Mammary epithelial cell (primary cell): ENCODE measurements at regions of chr11 and their contacts with region 1.

Region 1: GRCh38 chr11:7571640-7572000 is 57.8 kb downstream of the PPFIBP2 start:
- DNase-seq: peak; percentile 56
- H3K4me3 ChIP-seq: no peak overlapping the region
- H3K27ac ChIP-seq: no peak overlapping the region
- H3K4me1 ChIP-seq: peaks cover 20% of the 10 kb centered on the region
- H3K27me3 ChIP-seq: no peaks in the 10 kb centered on the region
- CTCF ChIP-seq: peak; percentile 96 to 98

Region 2: DNA sequence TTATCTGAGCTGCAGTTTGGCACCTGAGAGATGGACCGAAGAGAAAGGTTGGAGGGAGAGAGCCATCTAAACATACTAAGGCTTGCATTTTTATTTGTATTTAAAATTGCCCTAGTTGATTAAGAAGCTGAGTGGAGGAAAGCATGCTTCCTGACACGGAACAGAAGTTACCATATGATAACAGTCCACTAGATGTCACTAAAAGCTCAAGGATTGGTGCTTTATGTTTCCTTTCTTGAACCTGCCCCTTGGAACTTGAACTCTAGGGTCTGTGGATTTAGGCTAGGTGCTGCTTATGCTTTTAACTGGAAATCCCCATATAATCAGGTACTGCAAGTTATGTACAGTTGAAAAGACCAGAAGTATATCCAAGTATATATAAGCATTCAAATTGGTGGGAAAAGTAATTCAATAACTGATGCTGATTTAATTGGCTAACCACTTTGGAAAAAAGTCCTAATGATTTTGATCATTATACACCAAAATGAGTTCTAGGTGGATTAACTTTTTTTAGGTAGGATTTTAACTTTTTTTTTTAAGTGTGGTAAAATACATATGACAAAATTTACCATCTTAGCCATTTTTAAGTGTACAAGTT is 473.3 kb before region 1 on chr11:
- CTCF ChIA-PET with region 1: no interaction called
- dilution Hi-C with region 1: no loop called
- in situ Hi-C with region 1: no loop called
- intact Hi-C with region 1: loop called (anchors 1 kb)
- DNase-seq: peak; percentile 25
- H3K4me3 ChIP-seq: no peak overlapping the region
- H3K27ac ChIP-seq: no peak overlapping the region
- H3K4me1 ChIP-seq: no peaks in the 10 kb centered on the region
- H3K27me3 ChIP-seq: no peaks in the 10 kb centered on the region
- CTCF ChIP-seq: peak; percentile 61 to 68

Region 3: GRCh38 chr11:7442588-7443215 is 128.9 kb before region 1 on chr11:
- CTCF ChIA-PET with region 1: no interaction called
- dilution Hi-C with region 1: no loop called
- in situ Hi-C with region 1: no loop called
- intact Hi-C with region 1: no loop called
- DNase-seq: peak; percentile 40
- H3K4me3 ChIP-seq: no peak overlapping the region
- H3K27ac ChIP-seq: no peak overlapping the region
- H3K4me1 ChIP-seq: peaks cover 7% of the 10 kb centered on the region
- H3K27me3 ChIP-seq: no peaks in the 10 kb centered on the region
- CTCF ChIP-seq: peak; percentile 96

Region 4: DNA sequence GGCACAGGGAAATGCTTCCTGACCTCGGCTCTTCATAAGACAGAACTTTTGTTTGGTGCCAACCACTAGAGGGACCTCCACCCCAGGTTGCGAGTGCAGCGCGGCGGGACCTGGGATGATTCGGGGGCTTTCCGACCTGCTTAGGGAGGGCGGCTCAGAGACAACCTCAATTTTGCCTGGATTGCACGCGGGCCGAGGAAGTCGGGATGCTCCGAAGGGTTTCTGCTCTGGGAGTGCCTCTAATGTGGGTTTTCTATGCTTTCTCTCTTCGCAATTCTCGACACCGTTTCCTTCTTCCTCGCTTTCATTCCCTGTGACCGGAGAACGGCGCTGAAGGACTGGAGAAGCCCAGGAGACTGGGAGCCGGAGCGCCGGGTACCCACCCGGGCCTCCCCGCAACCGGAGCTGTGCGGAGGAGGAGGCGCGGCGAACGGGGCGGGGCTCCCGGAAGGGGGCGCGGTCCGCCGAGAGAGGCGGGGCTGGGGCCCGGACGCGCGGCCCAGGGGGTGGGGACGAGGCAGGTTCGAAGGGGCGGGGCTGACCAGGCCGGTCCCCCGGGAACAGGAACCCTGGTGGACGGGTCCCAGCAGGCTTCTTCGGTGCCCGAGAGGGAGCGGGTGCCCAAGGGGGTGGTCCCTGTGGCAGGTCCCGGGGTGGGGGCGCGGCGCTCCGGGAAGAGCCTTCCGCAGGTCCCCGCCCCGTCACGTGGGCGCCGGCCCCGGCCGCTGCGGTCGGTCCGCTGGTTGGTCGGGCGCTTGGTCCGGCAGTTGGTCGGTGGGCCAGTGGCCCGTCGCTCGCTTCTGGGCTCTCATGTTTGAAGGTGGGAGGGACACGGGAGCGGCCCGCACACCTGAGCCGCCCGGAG is 58.2 kb before region 1 on chr11 and contains the start of gene PPFIBP2:
- CTCF ChIA-PET with region 1: interaction called, 3 read pairs
- dilution Hi-C with region 1: no loop called
- in situ Hi-C with region 1: no loop called
- intact Hi-C with region 1: loop called (anchors 2 kb)
- DNase-seq: peak; percentile 64
- H3K4me3 ChIP-seq: peak within 1 kb of the TSS; percentile 67 to 85 (median 80)
- H3K27ac ChIP-seq: peak within 1 kb of the TSS; percentile 47
- H3K4me1 ChIP-seq: peaks cover 18% of the 10 kb centered on the region
- H3K27me3 ChIP-seq: no peaks in the 10 kb centered on the region
- CTCF ChIP-seq: peak; percentile 74 to 87
- total RNA-seq, gene PPFIBP2: 8.3 to 8.4 TPM

Region 5: DNA sequence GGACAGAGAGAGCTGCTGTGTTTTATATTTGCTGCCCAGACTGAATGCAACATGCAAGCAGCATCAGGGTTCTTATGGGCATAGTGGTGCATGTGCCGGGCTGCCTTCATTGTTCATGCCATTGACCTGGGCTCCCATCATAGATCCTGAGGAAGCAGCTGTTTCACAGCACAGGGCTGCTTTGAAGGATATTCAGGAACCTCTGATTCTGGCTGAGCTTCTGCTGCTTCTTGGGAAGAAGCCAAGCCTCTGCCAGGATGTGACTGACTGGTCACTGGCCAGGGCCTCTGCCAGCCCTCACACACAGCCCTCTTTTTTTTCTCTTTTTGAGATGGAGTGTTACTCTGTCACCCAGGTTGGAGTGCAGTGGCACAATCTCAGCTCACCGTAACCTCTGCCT is 58.4 kb after region 1 on chr11:
- CTCF ChIA-PET with region 1: no interaction called
- dilution Hi-C with region 1: loop called (anchors 5 kb)
- in situ Hi-C with region 1: no loop called
- intact Hi-C with region 1: no loop called
- DNase-seq: no peak
- H3K4me3 ChIP-seq: no peak overlapping the region
- H3K27ac ChIP-seq: no peak overlapping the region
- H3K4me1 ChIP-seq: no peaks in the 10 kb centered on the region
- H3K27me3 ChIP-seq: no peaks in the 10 kb centered on the region
- CTCF ChIP-seq: no peak

Region 6: DNA sequence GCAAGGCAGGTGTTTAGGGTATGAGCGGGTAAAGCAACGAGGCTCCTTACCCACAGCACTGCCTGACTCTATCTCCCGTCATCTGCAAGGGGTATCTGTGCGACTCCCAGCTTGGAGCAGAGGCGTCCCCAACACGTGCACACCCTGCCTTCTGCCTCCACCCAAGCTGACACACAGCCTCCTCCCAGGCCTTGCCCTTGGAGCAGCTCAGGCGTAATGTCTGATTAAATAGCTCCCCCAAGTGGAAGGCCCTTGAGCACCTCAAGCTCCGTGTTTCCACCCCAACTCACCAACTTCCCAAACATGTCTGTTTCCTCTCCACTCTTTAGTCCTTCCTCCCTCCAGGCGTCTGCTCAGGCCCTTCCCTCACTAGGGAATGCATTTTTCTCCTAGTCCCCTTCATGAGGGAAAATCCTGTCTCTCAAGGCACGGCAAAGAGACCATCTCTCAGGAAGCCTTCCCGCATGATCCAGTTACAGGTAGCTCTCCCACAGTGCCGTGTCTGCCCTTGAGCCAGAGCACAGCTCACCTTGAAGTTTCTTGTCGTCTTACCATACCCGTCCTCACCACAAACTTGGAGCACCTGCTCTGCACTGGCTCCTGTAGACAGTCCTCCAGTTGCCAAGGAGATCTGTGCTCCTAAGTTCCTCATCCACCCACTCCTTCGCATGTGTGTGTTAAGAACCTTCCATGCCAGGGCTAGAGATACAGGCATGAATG is 85.8 kb after region 1 on chr11:
- CTCF ChIA-PET with region 1: interaction called, 25 read pairs
- dilution Hi-C with region 1: no loop called
- in situ Hi-C with region 1: loop called (anchors 5 kb)
- intact Hi-C with region 1: loop called (anchors 1 kb)
- DNase-seq: peak; percentile 61
- H3K4me3 ChIP-seq: no peak overlapping the region
- H3K27ac ChIP-seq: no peak overlapping the region
- H3K4me1 ChIP-seq: no peaks in the 10 kb centered on the region
- H3K27me3 ChIP-seq: no peaks in the 10 kb centered on the region
- CTCF ChIP-seq: peak; percentile 60 to 78

Region 7: GRCh38 chr11:7688238-7688826 is 116.7 kb after region 1 on chr11:
- CTCF ChIA-PET with region 1: no interaction called
- dilution Hi-C with region 1: no loop called
- in situ Hi-C with region 1: no loop called
- intact Hi-C with region 1: loop called (anchors 1 kb)
- DNase-seq: peak; percentile 20
- H3K4me3 ChIP-seq: no peak overlapping the region
- H3K27ac ChIP-seq: no peak overlapping the region
- H3K4me1 ChIP-seq: peaks cover 9% of the 10 kb centered on the region
- H3K27me3 ChIP-seq: no peaks in the 10 kb centered on the region
- CTCF ChIP-seq: peak; percentile 78 to 83